Prostate gland (tissue), 2 donors: ENCODE measurements at regions of chr12 and their contacts with region 1.

Region 1: GRCh38 chr12:104223712-104224111 is 8.1 kb downstream of the TXNRD1 start:
- DNase-seq: no peak
- H3K4me3 ChIP-seq: no peak overlapping the region
- H3K27ac ChIP-seq: no peak overlapping the region
- H3K4me1 ChIP-seq: peaks cover 7% of the 10 kb centered on the region
- H3K27me3 ChIP-seq: no peaks in the 10 kb centered on the region
- CTCF ChIP-seq: no peak
- POLR2A ChIP-seq: no peak

Region 2: GRCh38 chr12:104132351-104132956 is 91.3 kb before region 1 on chr12:
- intact Hi-C with region 1: no loop called
- DNase-seq: peak; percentile 18
- H3K4me3 ChIP-seq: no peak overlapping the region
- H3K27ac ChIP-seq: peak overlapping the region; percentile 28 to 37
- H3K4me1 ChIP-seq: peaks cover 19% of the 10 kb centered on the region
- H3K27me3 ChIP-seq: no peaks in the 10 kb centered on the region
- CTCF ChIP-seq: no peak
- POLR2A ChIP-seq: no peak

Region 3: GRCh38 chr12:104187446-104188155 is 36.1 kb before region 1 on chr12:
- intact Hi-C with region 1: no loop called
- DNase-seq: no peak
- H3K4me3 ChIP-seq: no peak overlapping the region
- H3K27ac ChIP-seq: no peak overlapping the region
- H3K4me1 ChIP-seq: no peaks in the 10 kb centered on the region
- H3K27me3 ChIP-seq: no peaks in the 10 kb centered on the region
- CTCF ChIP-seq: no peak
- POLR2A ChIP-seq: no peak

Region 4: GRCh38 chr12:104201238-104202001 is 22.3 kb before region 1 on chr12:
- intact Hi-C with region 1: no loop called
- DNase-seq: peak; percentile 39
- H3K4me3 ChIP-seq: no peak overlapping the region
- H3K27ac ChIP-seq: no peak overlapping the region
- H3K4me1 ChIP-seq: no peaks in the 10 kb centered on the region
- H3K27me3 ChIP-seq: no peaks in the 10 kb centered on the region
- CTCF ChIP-seq: peak; percentile 49 to 79 (median 67)
- POLR2A ChIP-seq: no peak

Region 5: GRCh38 chr12:104280703-104281458 is 57.2 kb after region 1 on chr12:
- intact Hi-C with region 1: loop called (anchors 2 kb)
- DNase-seq: no peak
- H3K4me3 ChIP-seq: no peak overlapping the region
- H3K27ac ChIP-seq: no peak overlapping the region
- H3K4me1 ChIP-seq: no peaks in the 10 kb centered on the region
- H3K27me3 ChIP-seq: no peaks in the 10 kb centered on the region
- CTCF ChIP-seq: no peak
- POLR2A ChIP-seq: no peak